PC-9 (cell line): ENCODE measurements at regions of chr1 and their contacts with region 1.

Region 1: DNA sequence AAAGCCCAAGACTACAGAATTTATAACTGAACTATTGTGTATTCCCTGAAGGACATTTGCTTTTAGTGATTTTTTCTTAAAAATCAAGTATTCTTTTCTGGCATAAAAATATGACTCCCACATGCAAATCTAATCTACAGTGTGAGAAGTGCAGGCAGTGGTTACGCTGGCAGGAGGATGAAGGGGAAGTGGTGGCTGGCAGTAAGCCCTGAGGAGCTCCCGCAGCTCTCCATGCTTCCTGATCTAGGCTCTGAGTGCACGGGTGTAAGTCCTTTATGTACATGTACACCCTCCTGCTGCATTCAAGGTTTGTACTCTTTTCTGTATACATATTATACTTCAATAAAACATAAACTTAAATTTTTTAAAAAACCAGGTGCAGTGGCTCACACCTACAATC is 67.5 kb upstream of the PRDX6 start:
- DNase-seq: no peak
- H3K4me3 ChIP-seq: no peak overlapping the region
- H3K27ac ChIP-seq: no peak overlapping the region
- H3K4me1 ChIP-seq: peaks cover 22% of the 10 kb centered on the region
- H3K27me3 ChIP-seq: no peaks in the 10 kb centered on the region
- CTCF ChIP-seq: no peak

Region 2: DNA sequence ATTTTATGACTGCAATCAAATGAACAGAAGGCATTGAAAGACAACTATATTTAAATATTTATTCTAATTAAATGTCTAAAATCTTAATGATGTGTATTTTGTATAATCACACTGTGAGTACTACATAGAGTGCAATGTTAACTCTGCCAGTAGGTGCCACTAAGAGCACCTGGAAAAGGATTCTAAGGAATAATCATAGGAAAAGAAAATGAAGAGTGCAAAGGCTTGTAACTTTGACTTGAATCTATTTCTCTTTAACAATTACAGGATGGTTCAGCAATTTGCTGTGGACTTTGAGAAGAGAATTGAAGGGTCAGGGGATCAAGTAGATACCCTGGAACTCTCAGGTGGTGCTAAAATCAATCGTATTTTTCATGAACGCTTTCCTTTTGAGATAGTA is 1367.9 kb before region 1 on chr1:
- CTCF ChIA-PET with region 1: interaction called, 12 read pairs
- POLR2A ChIA-PET with region 1: no interaction called
- intact Hi-C with region 1: no loop called
- DNase-seq: no peak
- H3K4me3 ChIP-seq: no peak overlapping the region
- H3K27ac ChIP-seq: no peak overlapping the region
- H3K4me1 ChIP-seq: 0 out of 2 replicates have a peak, but pooled peaks cover 7% of the 10 kb centered on the region
- H3K27me3 ChIP-seq: no peaks in the 10 kb centered on the region
- CTCF ChIP-seq: peak; percentile 57

Region 3: GRCh38 chr1:173255214-173255813 is 154.3 kb before region 1 on chr1:
- CTCF ChIA-PET with region 1: no interaction called
- POLR2A ChIA-PET with region 1: no interaction called
- intact Hi-C with region 1: loop called (anchors 5 kb)
- DNase-seq: peak in 1 of 2 experiments; percentile 11
- H3K4me3 ChIP-seq: no peak overlapping the region
- H3K27ac ChIP-seq: no peak overlapping the region
- H3K4me1 ChIP-seq: no peaks in the 10 kb centered on the region
- H3K27me3 ChIP-seq: no peaks in the 10 kb centered on the region
- CTCF ChIP-seq: peak; percentile 86

Region 4: GRCh38 chr1:173503391-173503790 is 93.8 kb after region 1 on chr1:
- CTCF ChIA-PET with region 1: no interaction called
- POLR2A ChIA-PET with region 1: no interaction called
- intact Hi-C with region 1: no loop called
- DNase-seq: no peak
- H3K4me3 ChIP-seq: no peak overlapping the region
- H3K27ac ChIP-seq: no peak overlapping the region
- H3K4me1 ChIP-seq: peaks cover 35% of the 10 kb centered on the region
- H3K27me3 ChIP-seq: no peaks in the 10 kb centered on the region
- CTCF ChIP-seq: no peak